ENCODE measurements at regions of chr19 and their contacts with region 1.

Region 1: DNA sequence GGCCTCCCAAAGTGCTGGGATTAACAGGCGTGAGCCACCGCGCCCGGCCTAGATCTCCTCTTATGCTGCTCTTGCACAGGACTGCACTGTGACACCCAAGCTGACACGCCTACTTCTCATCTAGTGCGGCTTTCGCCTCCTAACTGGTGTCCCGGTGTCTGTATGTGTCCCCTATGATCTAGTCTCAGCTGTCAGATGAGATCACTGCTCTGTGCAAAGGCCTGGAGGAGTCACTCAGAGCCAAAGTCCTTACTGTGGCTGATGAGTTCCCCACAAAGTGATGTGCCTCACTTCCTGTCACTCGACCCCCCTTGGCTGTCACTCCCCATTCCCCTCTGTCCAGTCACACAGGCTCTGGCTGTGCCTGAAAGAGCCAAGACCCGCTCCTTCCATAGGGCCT is 2.5 kb downstream of the ZNF556 start:
- DNase-seq: no peak
- ATAC-seq: no peak
- H3K4me3 ChIP-seq: no peak overlapping the region
- H3K4me1 ChIP-seq: no peaks in the 10 kb centered on the region
- CTCF ChIP-seq: no peak

Region 2: DNA sequence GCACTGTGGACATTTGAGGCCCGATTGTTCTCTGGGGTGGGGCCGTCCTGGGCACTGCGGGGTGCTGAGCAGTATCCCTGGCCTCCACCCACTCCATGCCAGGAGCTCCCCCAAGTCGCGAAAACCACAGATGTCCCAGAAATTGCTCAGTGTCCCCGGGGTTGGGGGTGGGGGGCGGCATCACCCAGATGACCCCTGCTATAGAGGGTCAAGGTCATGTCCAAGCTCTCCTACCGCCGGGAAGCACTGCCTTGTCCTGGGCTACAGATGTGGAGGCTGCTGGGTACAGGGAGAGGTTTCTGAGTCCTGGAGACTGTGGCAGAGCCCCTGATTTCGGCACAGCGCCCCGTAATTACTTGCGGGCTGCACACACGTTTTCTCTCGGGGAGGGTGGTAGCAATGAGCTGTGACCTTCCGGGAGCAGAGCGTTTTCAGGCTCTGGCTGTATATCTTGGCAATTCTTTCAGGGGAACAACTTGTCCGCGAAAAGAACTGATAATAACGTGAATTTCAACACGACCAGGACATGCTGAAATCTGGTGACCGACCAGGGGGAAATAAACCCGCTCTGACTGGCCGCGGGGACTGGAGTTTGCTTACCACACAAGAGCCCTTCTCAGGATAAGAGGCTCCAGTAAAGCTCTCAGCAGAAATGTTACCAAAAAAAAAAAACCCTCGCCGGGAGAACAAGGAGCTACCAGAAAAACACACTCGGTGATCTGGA is 235.2 kb before region 1 on chr19:
- intact Hi-C with region 1: no loop called
- DNase-seq: no peak
- ATAC-seq: no peak
- H3K4me3 ChIP-seq: no peak overlapping the region
- H3K4me1 ChIP-seq: no peaks in the 10 kb centered on the region
- CTCF ChIP-seq: no peak

Region 3: DNA sequence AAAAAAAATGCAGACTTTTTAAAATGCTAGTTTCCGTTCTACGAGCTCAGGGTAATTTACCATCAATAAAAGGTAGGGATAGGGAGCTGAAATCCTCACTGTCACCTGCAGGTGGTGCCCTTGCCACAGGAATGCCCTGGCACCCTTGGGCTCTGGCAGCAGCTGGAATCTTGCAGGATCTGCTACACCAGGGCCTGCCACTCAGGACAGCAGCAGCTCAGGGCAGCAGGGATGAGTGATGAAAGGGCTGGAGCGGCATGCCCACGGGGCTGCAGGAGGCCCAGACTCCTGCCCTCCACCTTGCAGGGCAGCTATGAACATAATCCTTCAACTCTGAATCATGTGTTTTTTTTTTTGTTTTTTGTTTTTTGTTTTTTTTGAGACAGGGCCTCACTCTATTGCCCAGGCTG is 221.1 kb before region 1 on chr19:
- intact Hi-C with region 1: loop called (anchors 5 to 10 kb)
- DNase-seq: peak; percentile 75 to 88 (median 82)
- ATAC-seq: peak; percentile 98
- H3K4me3 ChIP-seq: no peak overlapping the region
- H3K4me1 ChIP-seq: no peaks in the 10 kb centered on the region
- CTCF ChIP-seq: peak; percentile 75

Region 4: DNA sequence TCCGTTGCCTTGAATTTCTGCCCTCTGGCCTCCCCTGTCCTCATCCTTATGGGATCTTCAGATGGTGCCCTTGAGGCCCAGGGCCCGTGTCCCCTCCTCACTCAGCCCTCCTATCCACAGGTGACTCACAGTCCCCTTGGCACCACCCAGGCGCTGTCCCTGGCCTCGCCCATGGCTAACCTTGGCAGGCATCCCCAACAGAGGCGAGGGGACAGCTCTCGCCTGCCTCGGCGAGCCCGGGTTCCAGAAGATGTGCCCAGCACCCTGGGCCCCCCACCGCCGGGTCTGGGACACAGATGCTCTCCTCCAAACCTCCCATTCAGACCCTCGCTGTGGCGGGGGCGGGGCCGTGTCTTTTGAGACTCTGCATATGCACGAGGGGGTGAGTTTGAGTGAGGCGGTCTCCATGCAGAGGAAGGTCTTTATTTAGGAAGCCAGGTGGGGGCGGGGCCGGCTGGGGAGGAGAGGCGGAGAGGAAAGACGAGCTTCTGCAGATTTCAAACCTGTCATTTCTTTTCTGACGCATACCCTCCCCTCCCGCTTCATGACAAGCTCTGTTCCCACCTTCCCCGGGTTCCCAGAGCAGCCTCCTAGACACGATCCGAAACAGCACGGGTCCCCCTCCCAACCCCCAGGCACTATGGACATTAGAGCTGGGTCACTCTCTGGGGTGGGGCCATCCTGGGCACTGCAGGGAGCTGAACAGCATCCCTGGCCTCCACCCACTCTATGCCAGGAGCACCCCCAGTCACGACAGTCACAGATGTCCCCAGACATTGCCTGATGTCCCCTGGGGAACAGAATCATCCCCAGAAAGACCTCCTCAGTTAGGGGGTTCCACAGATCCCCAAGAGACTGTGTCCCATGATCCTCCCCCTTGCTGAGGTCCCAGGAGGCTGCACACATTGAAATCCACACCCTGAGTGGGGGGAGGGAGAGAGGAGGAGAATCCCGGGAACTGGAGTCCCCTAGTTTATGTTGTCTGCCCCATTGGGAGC is 215.6 kb before region 1 on chr19:
- intact Hi-C with region 1: loop called (anchors 5 to 10 kb)
- DNase-seq: no peak
- ATAC-seq: no peak
- H3K4me3 ChIP-seq: no peak overlapping the region
- H3K4me1 ChIP-seq: no peaks in the 10 kb centered on the region
- CTCF ChIP-seq: no peak

Region 5: GRCh38 chr19:2759362-2759761 is 110.3 kb before region 1 on chr19:
- intact Hi-C with region 1: no loop called
- DNase-seq: no peak
- ATAC-seq: no peak
- H3K4me3 ChIP-seq: no peak overlapping the region
- H3K4me1 ChIP-seq: no peaks in the 10 kb centered on the region
- CTCF ChIP-seq: no peak